Posterior cingulate gyrus (tissue), 11 donors: ENCODE measurements at regions of chr13 and their contacts with region 1.

Region 1: DNA sequence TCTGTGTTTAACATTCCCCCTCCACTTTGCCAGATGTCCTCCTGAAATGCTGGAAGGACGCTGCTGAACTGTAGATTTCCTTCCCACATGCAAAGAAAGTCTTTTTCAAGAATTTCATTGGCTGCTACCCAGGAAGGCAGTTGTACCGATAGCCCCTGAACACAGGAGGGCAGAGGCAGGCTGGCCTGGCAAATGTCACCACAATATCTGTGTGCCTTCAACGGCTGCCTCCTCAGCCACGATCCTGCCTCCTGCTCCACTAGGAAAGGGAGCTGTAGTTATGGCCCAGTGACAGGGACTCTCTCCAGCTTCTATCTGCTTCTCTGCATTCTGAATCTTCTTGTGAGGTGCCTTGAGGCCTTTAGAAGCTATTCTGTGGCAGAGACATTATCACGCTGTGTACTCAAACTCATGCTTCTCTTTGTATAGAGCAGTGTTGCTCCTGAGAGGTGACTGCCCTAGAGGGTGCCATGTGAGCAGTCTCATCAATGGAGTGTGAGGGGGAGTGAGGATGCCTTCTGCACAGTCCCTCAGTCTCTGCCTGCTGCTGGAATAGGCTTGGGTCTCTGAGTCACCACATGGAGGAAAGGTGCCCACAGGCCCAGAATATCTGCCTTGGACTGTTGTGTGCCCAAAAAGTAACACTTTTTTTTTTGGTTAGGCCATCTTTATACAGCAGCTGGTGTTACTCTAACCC is 279.8 kb downstream of the DNAJC15 start:
- DNase-seq: peak in 9 of 10 donors; percentile 50 to 94 (median 64)

Region 2: DNA sequence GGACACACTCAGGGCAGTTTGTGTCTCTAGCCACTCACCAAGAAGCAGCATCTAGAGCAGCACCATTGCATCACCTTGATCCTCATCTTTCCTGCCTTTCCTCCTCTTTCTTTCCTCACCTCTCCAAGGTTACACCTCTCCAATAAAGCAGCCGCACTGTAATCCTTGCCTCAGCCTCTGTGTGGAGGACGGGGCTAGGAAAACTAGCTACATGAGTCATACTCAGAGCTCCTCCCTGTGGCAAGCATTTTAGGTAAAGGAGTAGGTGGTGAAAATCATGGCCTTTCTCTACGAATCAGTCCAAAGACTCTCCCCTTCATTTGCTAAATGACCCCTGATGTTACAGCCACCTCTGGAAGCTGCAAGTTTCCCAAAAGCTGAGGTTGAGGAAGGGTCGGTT is 170.9 kb before region 1 on chr13:
- intact Hi-C with region 1: no loop called
- DNase-seq: no peak

Region 3: GRCh38 chr13:43874504-43875092 is 571.4 kb after region 1 on chr13:
- intact Hi-C with region 1: loop called (anchors 5 kb)
- DNase-seq: no peak